Gastrocnemius medialis (tissue), 4 donors: ENCODE measurements at regions of chr9 and their contacts with region 1.

Region 1: DNA sequence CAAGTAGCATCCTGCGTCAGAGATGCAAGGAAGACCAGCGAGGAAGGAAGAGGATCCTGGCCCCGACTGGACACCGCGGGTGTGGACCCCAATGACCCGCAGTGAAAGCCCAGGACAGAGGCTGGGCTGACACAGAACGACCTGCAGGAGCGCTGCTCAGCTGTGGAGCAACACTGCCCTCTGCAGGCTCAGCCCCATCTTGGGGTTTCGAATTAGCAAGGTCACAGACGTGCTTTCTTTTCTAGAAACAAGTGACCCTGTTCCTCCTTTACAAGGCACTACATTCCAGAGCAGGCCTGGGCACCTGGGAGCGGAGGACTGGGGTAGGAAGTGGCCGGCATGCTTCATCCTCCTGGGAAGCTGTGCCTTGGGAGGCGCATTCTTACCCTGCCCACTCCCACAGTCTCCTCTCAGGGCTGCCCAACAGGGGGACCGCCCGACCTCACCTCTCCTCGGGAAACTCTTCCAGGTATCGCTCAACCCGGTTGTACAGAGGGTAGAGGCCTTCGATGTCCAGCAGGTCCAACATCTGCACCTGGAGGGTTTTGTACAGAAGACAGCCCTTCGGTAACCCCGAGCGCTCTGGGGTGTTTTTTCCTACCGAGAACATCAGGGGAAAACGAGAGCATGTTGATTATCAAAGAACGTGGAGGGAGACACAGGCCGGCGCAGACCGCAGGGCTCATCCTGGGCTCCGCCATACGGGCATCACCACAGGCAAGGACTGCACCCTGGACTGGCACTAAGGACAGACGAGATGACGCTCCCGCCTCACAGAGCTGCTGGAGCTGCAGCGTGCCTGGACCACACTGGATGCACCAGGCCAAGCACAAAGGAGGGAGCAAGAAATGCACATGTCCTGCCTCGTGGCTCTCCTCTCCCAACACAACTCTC is 35.0 kb downstream of the IPPK start:
- DNase-seq: peak; percentile 27 to 54
- ATAC-seq: peak; percentile 52 to 84
- H3K4me3 ChIP-seq: no peak overlapping the region
- H3K27ac ChIP-seq: no peak overlapping the region
- H3K4me1 ChIP-seq: no peaks in the 10 kb centered on the region
- H3K27me3 ChIP-seq: no peaks in the 10 kb centered on the region
- CTCF ChIP-seq: peak; percentile 71 to 88 (median 85)
- POLR2A ChIP-seq: no peak

Region 2: GRCh38 chr9:92140074-92140753 is 494.7 kb before region 1 on chr9:
- in situ Hi-C with region 1: loop called (anchors 10 to 25 kb)
- intact Hi-C with region 1: loop called (anchors 1 kb)
- DNase-seq: peak; percentile 44 to 65
- ATAC-seq: peak; percentile 34 to 75
- H3K4me3 ChIP-seq: peak overlapping the region in 3 of 4 donors; percentile 31 to 40 (median 37)
- H3K27ac ChIP-seq: no peak overlapping the region
- H3K4me1 ChIP-seq: peaks cover 0 to 8% of the 10 kb centered on the region in 2 donors
- H3K27me3 ChIP-seq: peaks cover 13 to 24% (median 14%) of the 10 kb centered on the region in 3 donors
- CTCF ChIP-seq: peak; percentile 47 to 86 (median 77)
- POLR2A ChIP-seq: no peak

Region 3: DNA sequence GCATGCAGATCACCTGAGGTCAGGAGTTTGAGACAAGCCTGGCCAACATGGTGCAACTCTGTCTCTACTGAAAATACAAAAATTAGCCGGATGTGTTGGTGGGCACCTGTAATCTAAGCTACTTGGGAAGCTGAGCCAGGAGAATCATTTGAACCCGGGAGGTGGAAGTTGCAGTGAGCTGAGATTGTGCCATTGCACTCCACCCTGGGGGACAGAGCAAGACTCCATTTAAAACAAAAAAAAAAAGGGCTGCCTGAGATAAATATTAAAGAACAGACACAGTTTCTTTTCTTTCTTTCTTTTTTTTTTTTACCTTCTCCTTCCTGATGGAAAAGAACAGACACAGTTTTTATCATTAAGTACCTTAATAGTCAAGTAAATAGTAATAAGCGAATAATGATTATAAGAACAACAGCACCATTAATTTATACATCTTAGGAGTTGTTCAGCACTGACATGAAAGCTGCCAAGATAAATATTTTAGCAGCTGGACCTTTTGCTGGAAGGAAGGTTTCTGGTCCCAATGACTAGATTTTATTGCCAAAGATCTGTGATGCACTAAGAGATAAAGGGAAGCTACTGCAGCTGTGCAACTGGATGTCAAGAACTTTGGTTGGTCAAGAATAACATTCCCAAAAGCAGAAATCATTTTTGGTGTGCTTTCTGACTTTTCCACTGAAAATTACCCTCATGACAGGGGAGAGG is 302.2 kb before region 1 on chr9:
- in situ Hi-C with region 1: loop called in 3 of 4 experiments (anchors 10 to 25 kb)
- intact Hi-C with region 1: no loop called
- DNase-seq: no peak
- ATAC-seq: no peak
- H3K4me3 ChIP-seq: no peak overlapping the region
- H3K27ac ChIP-seq: no peak overlapping the region
- H3K4me1 ChIP-seq: peaks cover 0 to 5% of the 10 kb centered on the region in 2 donors
- H3K27me3 ChIP-seq: no peaks in the 10 kb centered on the region
- CTCF ChIP-seq: no peak
- POLR2A ChIP-seq: no peak

Region 4: DNA sequence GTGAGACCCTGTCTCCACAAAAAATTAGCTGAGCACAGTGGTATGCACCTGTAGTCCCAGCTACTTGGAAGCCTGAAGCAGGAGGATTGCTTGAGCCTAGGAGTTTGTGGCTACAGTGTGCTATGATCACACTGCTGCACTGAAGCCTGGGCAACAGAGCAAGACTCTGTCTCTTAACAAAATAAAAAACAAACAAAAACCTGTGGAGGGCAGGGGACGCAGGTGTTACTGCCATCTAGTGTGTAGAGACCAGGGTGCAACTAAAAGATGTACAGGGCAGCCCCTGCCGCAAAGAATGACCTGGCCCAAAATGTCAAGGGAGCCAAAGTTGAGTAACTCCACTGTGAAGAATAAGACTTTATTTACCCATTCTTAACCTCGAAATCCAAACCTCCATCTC is 179.7 kb before region 1 on chr9:
- in situ Hi-C with region 1: loop called in 1 of 4 experiments (anchors 25 kb)
- intact Hi-C with region 1: no loop called
- DNase-seq: no peak
- ATAC-seq: no peak
- H3K4me3 ChIP-seq: no peak overlapping the region
- H3K27ac ChIP-seq: no peak overlapping the region
- H3K4me1 ChIP-seq: no peaks in the 10 kb centered on the region
- H3K27me3 ChIP-seq: no peaks in the 10 kb centered on the region
- CTCF ChIP-seq: no peak
- POLR2A ChIP-seq: no peak